OCI-LY7 (cell line): ENCODE measurements at regions of chr6 and their contacts with region 1.

Region 1: GRCh38 chr6:48962041-48962440 is 501.0 kb downstream of the MMUT start:
- DNase-seq: no peak
- H3K4me3 ChIP-seq: no peak overlapping the region
- H3K27ac ChIP-seq: no peak overlapping the region
- H3K4me1 ChIP-seq: no peaks in the 10 kb centered on the region
- CTCF ChIP-seq: no peak

Region 2: GRCh38 chr6:48973491-48973890 is 11.4 kb after region 1 on chr6:
- CTCF ChIA-PET with region 1: no interaction called
- POLR2A ChIA-PET with region 1: interaction called, 3 read pairs
- intact Hi-C with region 1: loop called (anchors 1 kb)
- DNase-seq: no peak
- H3K4me3 ChIP-seq: no peak overlapping the region
- H3K27ac ChIP-seq: no peak overlapping the region
- H3K4me1 ChIP-seq: no peaks in the 10 kb centered on the region
- CTCF ChIP-seq: no peak

Region 3: DNA sequence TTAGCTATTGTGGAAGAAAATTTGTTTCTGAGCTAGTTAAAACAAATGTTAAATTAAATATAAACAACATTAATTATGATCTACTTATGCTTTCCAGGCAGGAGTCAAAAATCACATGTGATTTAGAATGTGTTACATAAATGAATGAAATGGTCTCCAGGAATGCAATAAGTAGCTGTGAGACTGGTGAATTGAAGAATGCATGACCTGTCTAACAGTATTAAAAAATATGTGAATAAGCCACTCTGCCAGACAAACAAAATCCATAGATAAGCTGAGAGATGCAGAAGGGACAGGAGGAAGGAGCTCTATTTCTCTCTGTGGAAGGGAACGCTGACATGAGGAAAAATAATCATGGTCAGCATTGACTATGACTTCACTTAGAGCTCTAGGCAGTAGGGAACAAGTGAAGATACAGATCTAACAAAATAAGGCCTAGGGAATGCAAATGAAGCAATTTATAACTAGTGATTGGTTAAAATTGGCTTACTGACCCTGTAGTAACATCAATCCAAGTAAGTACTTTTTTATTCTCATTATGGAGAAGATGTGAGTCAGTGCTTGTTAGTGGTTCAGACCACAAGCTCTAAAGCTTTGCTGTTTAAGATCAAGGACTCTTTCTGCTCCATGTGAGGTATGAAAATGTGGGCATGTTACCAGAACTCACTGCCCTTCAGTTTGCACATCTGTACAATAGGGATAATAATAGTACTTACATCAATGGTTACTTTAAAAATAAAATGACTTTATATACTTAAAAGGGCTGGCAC is 68.4 kb after region 1 on chr6:
- CTCF ChIA-PET with region 1: no interaction called
- POLR2A ChIA-PET with region 1: no interaction called
- intact Hi-C with region 1: no loop called
- DNase-seq: no peak
- H3K4me3 ChIP-seq: no peak overlapping the region
- H3K27ac ChIP-seq: no peak overlapping the region
- H3K4me1 ChIP-seq: no peaks in the 10 kb centered on the region
- CTCF ChIP-seq: no peak